PC-3 (cell line): ENCODE measurements at regions of chr3 and their contacts with region 1.

Region 1: GRCh38 chr3:64484289-64484992 is 203.4 kb downstream of the ADAMTS9 start:
- DNase-seq: peak; percentile 73
- ATAC-seq: peak; percentile 96
- H3K4me3 ChIP-seq: no peak overlapping the region
- H3K27ac ChIP-seq: no peak overlapping the region
- H3K4me1 ChIP-seq: no peaks in the 10 kb centered on the region
- H3K27me3 ChIP-seq: no peaks in the 10 kb centered on the region
- CTCF ChIP-seq: peak; percentile 72

Region 2: GRCh38 chr3:64405211-64405835 is 79.1 kb before region 1 on chr3:
- CTCF ChIA-PET with region 1: no interaction called
- POLR2A ChIA-PET with region 1: no interaction called
- intact Hi-C with region 1: loop called (anchors 10 kb)
- DNase-seq: no peak
- ATAC-seq: no peak
- H3K4me3 ChIP-seq: no peak overlapping the region
- H3K27ac ChIP-seq: no peak overlapping the region
- H3K4me1 ChIP-seq: no peaks in the 10 kb centered on the region
- H3K27me3 ChIP-seq: no peaks in the 10 kb centered on the region
- CTCF ChIP-seq: no peak